PC-3 (cell line): ENCODE measurements at regions of chr11 and their contacts with region 1.

Region 1: GRCh38 chr11:65418711-65419459 is 3.7 kb upstream of the NEAT1 start:
- DNase-seq: peak; percentile 98
- ATAC-seq: peak; percentile 25
- H3K4me3 ChIP-seq: peak overlapping the region; percentile 41
- H3K27ac ChIP-seq: peak overlapping the region; percentile 99
- H3K4me1 ChIP-seq: peaks cover 53% of the 10 kb centered on the region
- H3K27me3 ChIP-seq: no peaks in the 10 kb centered on the region
- CTCF ChIP-seq: no peak

Region 2: GRCh38 chr11:65366340-65366773 is 52.5 kb before region 1 on chr11:
- CTCF ChIA-PET with region 1: interaction called, 15 read pairs
- POLR2A ChIA-PET with region 1: interaction called, 11 read pairs
- intact Hi-C with region 1: loop called (anchors 1 kb)
- DNase-seq: peak; percentile 86
- ATAC-seq: peak; percentile 63
- H3K4me3 ChIP-seq: no peak overlapping the region
- H3K27ac ChIP-seq: peak overlapping the region; percentile 6; the same call in 1 of the 2 replicates
- H3K4me1 ChIP-seq: peaks cover 8% of the 10 kb centered on the region
- H3K27me3 ChIP-seq: no peaks in the 10 kb centered on the region
- CTCF ChIP-seq: peak; percentile 75

Region 3: GRCh38 chr11:65382033-65382807 is 36.7 kb before region 1 on chr11 and contains the start of gene SLC25A45:
- CTCF ChIA-PET with region 1: interaction called, 3 read pairs
- POLR2A ChIA-PET with region 1: interaction called, 18 read pairs
- intact Hi-C with region 1: loop called (anchors 1 kb)
- DNase-seq: peak; percentile 99
- ATAC-seq: peak; percentile 78
- H3K4me3 ChIP-seq: peak within 1 kb of the TSS; percentile 55
- H3K27ac ChIP-seq: peak within 1 kb of the TSS; percentile 98
- H3K4me1 ChIP-seq: peaks cover 57% of the 10 kb centered on the region
- H3K27me3 ChIP-seq: no peaks in the 10 kb centered on the region
- CTCF ChIP-seq: peak; percentile 82
- total RNA-seq, gene SLC25A45: 12.7 and 13.1 TPM in 2 replicates

Region 4: GRCh38 chr11:65429724-65430405 is 11.0 kb after region 1 on chr11:
- CTCF ChIA-PET with region 1: interaction called, 4 read pairs
- POLR2A ChIA-PET with region 1: interaction called, 5 read pairs
- intact Hi-C with region 1: loop called (anchors 1 kb)
- DNase-seq: peak; percentile 37
- ATAC-seq: peak; percentile 0; the same call in 1 of the 2 replicates
- H3K4me3 ChIP-seq: no peak overlapping the region
- H3K27ac ChIP-seq: 0 out of 2 replicates have a peak overlapping the region, but pooled peaks have one; percentile 2
- H3K4me1 ChIP-seq: peaks cover 22% of the 10 kb centered on the region
- H3K27me3 ChIP-seq: no peaks in the 10 kb centered on the region
- CTCF ChIP-seq: no peak

Region 5: GRCh38 chr11:65471410-65471762 is 52.5 kb after region 1 on chr11:
- CTCF ChIA-PET with region 1: interaction called, 9 read pairs
- POLR2A ChIA-PET with region 1: interaction called, 5 read pairs
- intact Hi-C with region 1: loop called (anchors 2 kb)
- DNase-seq: peak; percentile 59
- ATAC-seq: peak; percentile 30
- H3K4me3 ChIP-seq: peak overlapping the region; percentile 5; the same call in 1 of the 2 replicates
- H3K27ac ChIP-seq: peak overlapping the region; percentile 95
- H3K4me1 ChIP-seq: peaks cover 36% of the 10 kb centered on the region
- H3K27me3 ChIP-seq: no peaks in the 10 kb centered on the region
- CTCF ChIP-seq: peak; percentile 66

Region 6: DNA sequence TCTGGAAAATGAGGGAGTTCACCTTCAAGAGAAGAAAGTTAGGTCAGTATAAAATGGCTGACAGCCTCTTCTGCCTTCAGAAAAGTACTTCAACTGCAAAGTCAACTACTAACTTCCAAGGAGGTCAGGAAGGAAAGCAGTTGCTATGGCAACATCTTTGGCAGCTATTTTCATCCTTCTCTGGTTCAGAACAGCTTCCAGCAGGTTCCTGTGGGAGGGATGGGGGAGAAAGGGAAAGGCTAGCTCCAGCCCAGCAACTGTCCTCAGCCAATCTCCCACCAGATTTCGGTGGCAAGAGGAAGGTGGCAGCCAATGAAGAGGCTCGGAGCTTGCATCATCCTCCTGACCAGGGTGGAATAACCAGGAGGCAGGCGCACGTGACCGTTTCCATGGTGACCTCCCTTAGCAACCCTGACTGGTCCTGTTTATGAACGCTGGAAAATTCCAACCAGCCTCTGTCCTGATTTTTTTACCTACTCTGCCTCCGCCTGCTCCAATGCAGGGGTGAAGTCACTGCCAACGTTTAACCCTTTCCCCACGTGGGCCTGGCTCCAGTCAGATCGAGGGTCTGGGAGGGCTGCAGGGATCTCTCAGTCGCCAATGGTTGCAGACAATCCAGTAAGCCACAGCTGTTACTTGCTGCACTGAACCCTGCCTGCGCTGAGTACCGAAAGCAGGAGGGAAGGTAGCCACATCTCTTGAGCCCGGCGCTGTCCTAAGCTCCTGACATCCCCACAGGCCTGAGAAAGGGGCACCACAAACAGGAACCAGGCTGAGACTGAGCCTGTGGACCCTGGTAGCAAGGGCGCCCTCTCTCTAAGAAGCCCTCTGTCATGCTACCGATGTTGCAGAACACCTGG is 68.8 kb after region 1 on chr11:
- CTCF ChIA-PET with region 1: no interaction called
- POLR2A ChIA-PET with region 1: interaction called, 10 read pairs
- intact Hi-C with region 1: no loop called
- DNase-seq: peak; percentile 94
- ATAC-seq: peak; percentile 59
- H3K4me3 ChIP-seq: no peak overlapping the region
- H3K27ac ChIP-seq: peak overlapping the region; percentile 29
- H3K4me1 ChIP-seq: peaks cover 40% of the 10 kb centered on the region
- H3K27me3 ChIP-seq: no peaks in the 10 kb centered on the region
- CTCF ChIP-seq: no peak

Region 7: DNA sequence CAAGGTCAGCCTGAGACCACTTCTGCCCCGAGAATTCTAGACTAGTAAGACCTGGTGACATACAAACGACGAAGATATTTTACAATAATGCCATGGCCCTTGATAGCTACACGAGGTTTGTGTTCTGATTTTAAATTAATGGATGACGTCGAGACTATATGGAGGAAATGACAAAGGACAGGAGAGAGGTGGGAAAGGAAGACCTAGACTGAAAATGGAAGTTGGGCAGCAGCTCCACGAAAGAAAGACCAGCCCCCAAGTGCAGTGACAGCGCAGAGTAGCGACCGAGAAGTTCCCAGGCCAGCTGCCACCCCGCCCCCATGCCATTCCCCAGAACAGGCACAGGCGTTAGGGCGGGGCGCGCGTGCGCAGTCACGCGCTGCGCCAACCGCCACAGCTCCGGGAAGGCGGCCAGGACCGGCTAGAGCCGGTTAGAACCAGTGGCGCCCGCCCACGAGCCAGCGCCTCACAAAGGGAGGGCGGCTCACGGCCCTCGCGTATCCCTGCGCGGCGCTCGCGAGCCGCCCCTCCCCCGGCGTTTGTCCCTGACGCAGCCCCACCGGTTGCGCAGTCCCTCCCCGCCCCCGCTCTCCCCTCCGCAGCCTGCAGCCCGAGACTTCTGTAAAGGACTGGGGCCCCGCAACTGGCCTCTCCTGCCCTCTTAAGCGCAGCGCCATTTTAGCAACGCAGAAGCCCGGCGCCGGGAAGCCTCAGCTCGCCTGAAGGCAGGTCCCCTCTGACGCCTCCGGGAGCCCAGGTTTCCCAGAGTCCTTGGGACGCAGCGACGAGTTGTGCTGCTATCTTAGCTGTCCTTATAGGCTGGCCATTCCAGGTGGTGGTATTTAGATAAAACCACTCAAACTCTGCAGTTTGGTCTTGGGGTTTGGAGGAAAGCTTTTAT is 78.5 kb after region 1 on chr11:
- CTCF ChIA-PET with region 1: interaction called, 4 read pairs
- POLR2A ChIA-PET with region 1: interaction called, 31 read pairs
- intact Hi-C with region 1: no loop called
- DNase-seq: peak; percentile 99
- ATAC-seq: peak; percentile 72
- H3K4me3 ChIP-seq: peak overlapping the region; percentile 95
- H3K27ac ChIP-seq: peak overlapping the region; percentile 95
- H3K4me1 ChIP-seq: peaks cover 48% of the 10 kb centered on the region
- H3K27me3 ChIP-seq: no peaks in the 10 kb centered on the region
- CTCF ChIP-seq: no peak

Region 8: GRCh38 chr11:66242095-66242765 is 823.3 kb after region 1 on chr11:
- CTCF ChIA-PET with region 1: no interaction called
- POLR2A ChIA-PET with region 1: no interaction called
- intact Hi-C with region 1: no loop called
- DNase-seq: no peak
- ATAC-seq: no peak
- H3K4me3 ChIP-seq: no peak overlapping the region
- H3K27ac ChIP-seq: no peak overlapping the region
- H3K4me1 ChIP-seq: no peaks in the 10 kb centered on the region
- H3K27me3 ChIP-seq: no peaks in the 10 kb centered on the region
- CTCF ChIP-seq: no peak